AG04449 (cell line): ENCODE measurements at regions of chr10 and their contacts with region 1.

Region 1: GRCh38 chr10:16777473-16778370 is 39.5 kb downstream of the RSU1 start:
- DNase-seq: no peak
- H3K4me3 ChIP-seq: no peak overlapping the region
- CTCF ChIP-seq: peak; percentile 32

Region 2: DNA sequence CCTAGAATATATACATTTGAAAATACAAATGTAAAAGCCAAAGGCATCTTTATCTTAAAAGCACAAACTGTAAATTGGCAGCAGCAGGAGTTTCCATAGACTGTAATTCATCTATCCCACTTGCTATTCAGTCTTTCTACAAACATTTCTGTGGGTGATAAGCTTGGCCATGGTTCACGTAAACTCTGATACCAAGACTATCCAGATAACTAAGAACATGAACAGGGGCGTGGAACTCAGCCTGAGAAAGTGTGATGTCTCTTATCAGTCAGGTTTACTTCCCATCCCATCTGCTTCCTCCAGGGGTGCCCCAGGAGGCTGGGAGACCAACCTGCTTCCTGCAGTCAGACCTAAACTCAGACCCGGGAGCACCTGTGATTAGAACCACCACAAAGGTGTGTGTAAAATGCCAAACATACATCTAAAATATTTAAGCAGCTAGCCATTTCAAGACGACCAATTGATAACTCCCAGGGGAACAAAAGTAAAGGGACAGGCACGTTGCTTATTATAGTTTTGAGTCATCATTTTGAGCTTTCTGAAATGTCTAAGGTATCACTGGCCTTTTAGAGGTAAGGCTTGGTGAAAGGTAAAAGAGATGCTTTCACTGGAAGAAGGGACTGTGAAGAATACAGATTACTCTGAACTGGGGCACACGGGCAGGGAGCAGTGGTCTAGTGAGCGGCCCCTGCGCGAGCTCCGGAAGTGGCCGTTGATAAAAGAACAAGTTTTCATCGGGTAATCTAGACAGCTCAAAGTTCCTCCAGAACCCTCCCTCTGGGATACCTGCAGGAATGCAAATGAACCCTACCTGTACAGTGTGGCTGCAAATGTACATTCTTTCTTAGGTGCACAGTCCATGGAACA is 12.0 kb before region 1 on chr10:
- CTCF ChIA-PET with region 1: interaction called, 36 read pairs
- POLR2A ChIA-PET with region 1: no interaction called
- DNase-seq: no peak
- H3K4me3 ChIP-seq: no peak overlapping the region
- CTCF ChIP-seq: no peak

Region 3: GRCh38 chr10:16789261-16789660 is 11.5 kb after region 1 on chr10:
- CTCF ChIA-PET with region 1: interaction called, 12 read pairs
- POLR2A ChIA-PET with region 1: no interaction called
- DNase-seq: no peak
- H3K4me3 ChIP-seq: no peak overlapping the region
- CTCF ChIP-seq: no peak

Region 4: DNA sequence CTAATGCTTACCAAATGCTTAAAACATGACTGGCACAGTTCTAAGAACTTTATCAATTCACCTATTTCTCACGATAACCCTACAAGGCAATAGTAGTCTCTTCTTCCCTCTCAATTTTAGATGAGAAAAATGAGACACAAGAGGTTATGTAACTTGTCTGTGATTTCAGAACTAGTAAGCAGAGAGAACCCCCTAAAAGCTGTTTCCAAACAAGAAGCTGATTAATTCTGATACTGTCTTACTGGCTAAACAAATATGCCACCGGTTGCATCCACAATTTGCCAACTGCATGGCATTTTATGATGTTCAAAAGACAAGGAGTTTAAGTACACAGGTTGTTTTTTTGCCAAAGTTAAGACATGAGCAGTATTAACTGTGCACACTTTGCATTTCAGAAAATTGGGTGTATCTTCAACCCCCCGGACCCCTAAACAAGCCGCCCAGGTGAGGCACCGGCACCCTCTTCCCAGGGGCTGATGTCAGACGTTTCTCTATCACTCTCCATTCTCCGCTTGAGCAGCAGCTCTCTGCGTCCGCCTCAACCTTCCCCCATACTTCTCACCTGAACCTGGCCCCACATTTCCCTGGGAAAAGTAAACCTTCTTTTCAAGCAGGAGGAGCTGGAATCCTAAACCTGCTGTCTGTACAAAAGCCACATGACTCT is 17.8 kb after region 1 on chr10:
- CTCF ChIA-PET with region 1: interaction called, 12 read pairs
- POLR2A ChIA-PET with region 1: no interaction called
- DNase-seq: no peak
- H3K4me3 ChIP-seq: no peak overlapping the region
- CTCF ChIP-seq: no peak

Region 5: DNA sequence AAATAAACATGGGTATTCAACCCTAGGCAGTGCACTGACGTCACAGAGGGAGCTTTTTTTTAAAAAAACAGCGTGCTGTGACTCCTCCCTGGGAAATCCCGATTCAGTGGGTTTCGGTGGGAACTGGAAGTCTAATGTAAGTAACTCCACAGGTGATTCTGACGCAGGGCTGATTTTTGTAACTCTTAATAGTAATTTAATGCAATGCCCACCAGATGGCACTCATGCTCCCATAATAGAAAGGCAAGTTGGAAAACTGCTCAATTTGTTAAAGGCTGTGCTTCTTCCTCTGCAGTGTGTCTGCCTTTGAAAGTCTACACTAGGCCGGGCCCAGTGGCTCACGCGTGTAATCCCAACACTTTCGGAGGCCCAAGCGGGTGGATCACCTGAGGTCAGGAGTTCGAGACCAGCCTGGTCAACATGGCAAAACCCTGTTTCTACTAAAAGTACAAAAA is 50.4 kb after region 1 on chr10:
- CTCF ChIA-PET with region 1: no interaction called
- POLR2A ChIA-PET with region 1: no interaction called
- DNase-seq: peak; percentile 31
- H3K4me3 ChIP-seq: no peak overlapping the region
- CTCF ChIP-seq: peak; percentile 26